ENCODE measurements at regions of chr2 and their contacts with region 1.

Region 1: GRCh38 chr2:101831351-101831865 is 133.9 kb downstream of the MAP4K4 start:
- DNase-seq: peak; percentile 76
- H3K4me3 Mint-ChIP-seq: peak overlapping the region; percentile 7
- H3K27ac Mint-ChIP-seq: peak overlapping the region; percentile 87
- H3K4me1 Mint-ChIP-seq: peaks cover 55% of the 10 kb centered on the region
- H3K27me3 Mint-ChIP-seq: no peaks in the 10 kb centered on the region

Region 2: GRCh38 chr2:100703213-100703612 is 1128.2 kb before region 1 on chr2:
- CTCF ChIA-PET with region 1: no interaction called
- intact Hi-C with region 1: no loop called
- DNase-seq: no peak
- H3K4me3 Mint-ChIP-seq: no peak overlapping the region
- H3K27ac Mint-ChIP-seq: no peak overlapping the region
- H3K4me1 Mint-ChIP-seq: peaks cover 37% of the 10 kb centered on the region
- H3K27me3 Mint-ChIP-seq: no peaks in the 10 kb centered on the region

Region 3: DNA sequence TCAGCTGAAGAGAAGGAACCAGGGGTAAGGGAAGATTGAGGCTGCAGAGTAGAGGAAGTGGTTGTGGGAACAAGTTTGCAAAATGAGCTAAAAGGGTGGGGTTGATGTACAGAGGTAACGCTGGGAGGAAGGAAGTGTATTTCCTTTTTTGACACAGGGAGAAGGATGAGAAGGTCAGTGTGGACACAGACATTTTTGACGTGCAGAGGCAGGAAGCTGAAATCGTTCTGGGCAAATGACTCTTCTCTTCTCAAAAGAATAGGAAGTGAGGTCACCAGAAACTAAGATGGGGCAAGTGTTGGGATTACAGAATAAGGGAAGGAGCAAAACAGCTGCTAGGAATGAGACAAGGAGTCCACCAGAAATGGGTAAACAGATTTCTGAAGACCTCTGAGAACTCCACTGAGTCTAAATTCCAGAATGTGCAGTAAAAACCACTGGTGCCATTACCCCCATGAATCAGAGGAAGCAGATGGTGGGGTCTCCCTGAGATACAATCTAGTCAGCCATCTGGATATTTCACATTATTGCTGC is 502.9 kb before region 1 on chr2:
- CTCF ChIA-PET with region 1: no interaction called
- intact Hi-C with region 1: loop called (anchors 5 kb)
- DNase-seq: peak; percentile 60
- H3K4me3 Mint-ChIP-seq: no peak overlapping the region
- H3K27ac Mint-ChIP-seq: no peak overlapping the region
- H3K4me1 Mint-ChIP-seq: peaks cover 18% of the 10 kb centered on the region
- H3K27me3 Mint-ChIP-seq: no peaks in the 10 kb centered on the region

Region 4: GRCh38 chr2:101371636-101372035 is 459.8 kb before region 1 on chr2:
- CTCF ChIA-PET with region 1: no interaction called
- intact Hi-C with region 1: no loop called
- DNase-seq: no peak
- H3K4me3 Mint-ChIP-seq: no peak overlapping the region
- H3K27ac Mint-ChIP-seq: no peak overlapping the region
- H3K4me1 Mint-ChIP-seq: peaks cover 10% of the 10 kb centered on the region
- H3K27me3 Mint-ChIP-seq: no peaks in the 10 kb centered on the region

Region 5: GRCh38 chr2:101518578-101519492 is 312.6 kb before region 1 on chr2:
- CTCF ChIA-PET with region 1: no interaction called
- intact Hi-C with region 1: loop called (anchors 5 kb)
- DNase-seq: peak; percentile 43
- H3K4me3 Mint-ChIP-seq: no peak overlapping the region
- H3K27ac Mint-ChIP-seq: no peak overlapping the region
- H3K4me1 Mint-ChIP-seq: peaks cover 47% of the 10 kb centered on the region
- H3K27me3 Mint-ChIP-seq: no peaks in the 10 kb centered on the region

Region 6: GRCh38 chr2:101697124-101698013 is 134.0 kb before region 1 on chr2 and contains the start of gene MAP4K4:
- CTCF ChIA-PET with region 1: interaction called, 5 read pairs
- intact Hi-C with region 1: loop called (anchors 1 kb)
- DNase-seq: peak; percentile 82
- H3K4me3 Mint-ChIP-seq: peak within 1 kb of the TSS; percentile 78
- H3K27ac Mint-ChIP-seq: peak within 1 kb of the TSS; percentile 81
- H3K4me1 Mint-ChIP-seq: peaks cover 33% of the 10 kb centered on the region
- H3K27me3 Mint-ChIP-seq: no peaks in the 10 kb centered on the region
- total RNA-seq, gene MAP4K4: 126 to 131 TPM

Region 7: DNA sequence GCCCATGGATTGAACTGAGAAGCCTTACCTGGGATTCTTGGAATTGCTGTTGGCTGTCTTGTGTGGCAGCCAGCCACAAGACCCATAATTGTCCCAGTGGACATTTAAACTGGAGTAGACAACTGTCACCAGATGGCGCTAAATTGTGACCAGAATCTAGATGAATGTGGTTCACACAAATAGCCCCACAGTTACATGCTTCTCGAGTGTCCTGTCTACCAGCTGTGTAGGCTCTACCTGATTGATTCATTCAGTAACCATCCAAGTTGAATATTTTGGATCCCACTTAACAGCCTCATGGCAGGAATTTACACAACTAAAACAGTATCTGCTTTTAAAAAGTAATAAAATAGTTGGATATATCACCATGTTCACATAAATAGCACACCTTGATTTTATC is 60.7 kb before region 1 on chr2:
- CTCF ChIA-PET with region 1: interaction called, 4 read pairs
- intact Hi-C with region 1: loop called (anchors 1 kb)
- DNase-seq: peak; percentile 37
- H3K4me3 Mint-ChIP-seq: no peak overlapping the region
- H3K27ac Mint-ChIP-seq: no peak overlapping the region
- H3K4me1 Mint-ChIP-seq: peaks cover 86% of the 10 kb centered on the region
- H3K27me3 Mint-ChIP-seq: no peaks in the 10 kb centered on the region

Region 8: DNA sequence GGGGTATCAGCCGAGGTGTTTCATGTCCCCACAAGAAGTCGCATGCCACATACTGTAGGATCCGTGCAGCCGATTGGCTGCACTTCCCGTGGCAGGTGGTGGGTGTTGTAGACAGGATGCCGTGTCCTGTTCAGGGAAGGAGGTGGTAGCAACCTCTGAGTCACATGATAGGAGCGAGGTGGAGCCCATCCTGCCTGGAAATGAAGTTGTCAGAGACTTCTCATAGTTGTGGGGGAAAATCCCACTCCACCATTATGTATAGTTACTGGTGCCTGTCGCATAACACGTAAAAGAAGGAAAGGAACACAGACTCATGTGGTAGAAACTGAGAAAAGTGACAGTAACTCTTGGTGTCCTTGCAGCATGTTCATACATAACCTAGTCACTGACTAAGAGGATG is 69.0 kb after region 1 on chr2:
- CTCF ChIA-PET with region 1: no interaction called
- intact Hi-C with region 1: loop called (anchors 1 kb)
- DNase-seq: peak; percentile 87
- H3K4me3 Mint-ChIP-seq: no peak overlapping the region
- H3K27ac Mint-ChIP-seq: peak overlapping the region; percentile 87
- H3K4me1 Mint-ChIP-seq: peaks cover 33% of the 10 kb centered on the region
- H3K27me3 Mint-ChIP-seq: peaks cover 2% of the 10 kb centered on the region

Region 9: DNA sequence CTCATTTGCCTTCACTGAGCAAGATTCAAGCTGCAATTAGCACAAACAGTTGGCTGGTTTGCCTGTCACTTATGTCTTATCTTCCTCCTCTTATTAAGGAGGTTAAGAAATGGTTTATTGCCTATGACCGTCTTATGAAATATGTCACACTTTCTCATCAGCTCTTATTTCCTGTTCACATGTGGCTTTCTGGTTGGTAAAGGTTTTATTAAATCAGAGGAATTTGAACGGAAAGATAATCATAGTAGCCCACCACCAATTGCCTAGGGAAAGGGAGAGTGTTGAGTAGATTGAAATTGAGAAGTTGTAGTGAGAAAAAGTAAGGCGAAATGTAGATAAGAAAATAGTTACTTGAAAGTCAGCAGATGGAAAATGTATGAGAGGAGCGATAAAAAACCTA is 306.9 kb after region 1 on chr2:
- CTCF ChIA-PET with region 1: no interaction called
- intact Hi-C with region 1: no loop called
- DNase-seq: peak; percentile 38
- H3K4me3 Mint-ChIP-seq: no peak overlapping the region
- H3K27ac Mint-ChIP-seq: peak overlapping the region; percentile 62
- H3K4me1 Mint-ChIP-seq: peaks cover 46% of the 10 kb centered on the region
- H3K27me3 Mint-ChIP-seq: peaks cover 29% of the 10 kb centered on the region